Activated T-helper 1 cell treated with anti-CD3 and anti-CD28 coated beads, Interleukin-12 subunit alpha, Interleukin-12 subunit beta, Interleukin-2, Interleukin-4 antibody, amounts not matched to agents 30 ng/mL and 10 ng/mL and 1 ng/mL, durations not matched to agents 14 hours and 24 hours and 36 hours (primary cell): ENCODE measurements at regions of chr11 and their contacts with region 1.

Region 1: GRCh38 chr11:94493281-94494125 is at the starts of genes ANKRD49 and MRE11:
- DNase-seq: peak; percentile 96
- H3K4me3 Mint-ChIP-seq: peak within 1 kb of the TSS; percentile 94
- H3K27ac Mint-ChIP-seq: peak within 1 kb of the TSS; percentile 92
- H3K4me1 Mint-ChIP-seq: peaks cover 36% of the 10 kb centered on the region
- H3K27me3 Mint-ChIP-seq: no peaks in the 10 kb centered on the region
- total RNA-seq, gene ANKRD49: 20.0 and 21.2 TPM in 2 replicates
- total RNA-seq, gene MRE11: 43.8 and 45.9 TPM in 2 replicates

Region 2: DNA sequence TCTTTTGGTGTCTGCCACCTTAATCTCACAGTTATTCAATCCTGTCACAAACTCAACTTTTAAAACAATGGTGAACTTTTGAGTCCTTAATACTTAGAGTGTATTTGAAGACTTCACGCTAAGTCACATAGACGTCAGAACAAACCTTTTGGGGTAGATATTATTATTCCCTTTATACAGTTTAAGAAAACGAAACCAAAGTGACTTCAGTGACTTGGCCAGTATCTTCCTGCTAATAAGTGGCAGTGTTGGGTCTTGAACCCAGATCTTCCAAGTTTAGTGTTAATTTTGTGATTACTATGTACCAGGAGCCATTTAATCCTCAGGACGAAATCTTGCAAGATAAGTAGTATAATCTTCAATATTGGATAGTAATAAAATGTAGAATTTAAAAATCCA is 831.3 kb before region 1 on chr11:
- intact Hi-C with region 1: loop called (anchors 10 kb)
- DNase-seq: no peak
- H3K4me3 Mint-ChIP-seq: peak overlapping the region; percentile 89
- H3K27ac Mint-ChIP-seq: peak overlapping the region; percentile 86
- H3K4me1 Mint-ChIP-seq: peaks cover 47% of the 10 kb centered on the region
- H3K27me3 Mint-ChIP-seq: no peaks in the 10 kb centered on the region

Region 3: DNA sequence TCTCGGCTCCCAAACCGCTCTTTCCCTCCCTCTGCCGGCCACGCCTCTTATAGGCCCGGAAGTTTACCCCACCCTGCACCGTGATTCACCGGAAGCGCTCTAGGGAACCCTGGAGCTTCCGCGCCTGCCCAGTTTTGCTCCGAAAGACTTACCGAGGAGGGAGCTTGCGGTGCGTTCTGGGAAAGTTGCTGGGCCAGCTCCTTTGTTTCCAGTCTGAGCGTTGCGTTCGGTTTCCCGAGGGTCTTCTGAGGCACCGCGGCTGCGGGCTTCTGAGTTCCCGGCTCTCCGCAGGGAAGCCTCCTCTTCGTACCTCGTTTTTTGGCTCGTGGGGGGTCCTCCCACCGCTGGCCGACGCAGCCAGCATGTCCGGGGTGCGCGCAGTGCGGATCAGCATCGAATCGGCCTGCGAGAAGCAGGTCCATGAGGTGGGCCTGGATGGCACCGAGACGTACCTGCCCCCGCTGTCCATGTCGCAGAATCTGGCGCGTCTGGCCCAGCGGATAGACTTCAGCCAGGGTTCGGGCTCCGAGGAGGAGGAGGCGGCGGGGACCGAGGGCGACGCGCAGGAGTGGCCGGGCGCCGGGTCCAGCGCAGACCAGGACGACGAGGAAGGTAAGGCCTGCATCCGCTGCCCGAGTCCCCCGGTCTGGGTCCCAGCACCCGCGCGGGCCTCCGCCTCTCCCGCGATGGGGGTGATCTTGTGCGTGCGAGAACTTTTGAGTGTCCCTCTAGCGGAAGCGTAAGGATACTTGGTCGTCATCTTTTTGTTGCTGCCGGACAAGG is 709.2 kb before region 1 on chr11 and contains the start of gene MED17:
- intact Hi-C with region 1: loop called (anchors 1 kb)
- DNase-seq: peak; percentile 87
- H3K4me3 Mint-ChIP-seq: peak within 1 kb of the TSS; percentile 93
- H3K27ac Mint-ChIP-seq: peak within 1 kb of the TSS; percentile 88
- H3K4me1 Mint-ChIP-seq: peaks cover 45% of the 10 kb centered on the region
- H3K27me3 Mint-ChIP-seq: no peaks in the 10 kb centered on the region
- total RNA-seq, gene MED17: 55.8 and 59.4 TPM in 2 replicates

Region 4: DNA sequence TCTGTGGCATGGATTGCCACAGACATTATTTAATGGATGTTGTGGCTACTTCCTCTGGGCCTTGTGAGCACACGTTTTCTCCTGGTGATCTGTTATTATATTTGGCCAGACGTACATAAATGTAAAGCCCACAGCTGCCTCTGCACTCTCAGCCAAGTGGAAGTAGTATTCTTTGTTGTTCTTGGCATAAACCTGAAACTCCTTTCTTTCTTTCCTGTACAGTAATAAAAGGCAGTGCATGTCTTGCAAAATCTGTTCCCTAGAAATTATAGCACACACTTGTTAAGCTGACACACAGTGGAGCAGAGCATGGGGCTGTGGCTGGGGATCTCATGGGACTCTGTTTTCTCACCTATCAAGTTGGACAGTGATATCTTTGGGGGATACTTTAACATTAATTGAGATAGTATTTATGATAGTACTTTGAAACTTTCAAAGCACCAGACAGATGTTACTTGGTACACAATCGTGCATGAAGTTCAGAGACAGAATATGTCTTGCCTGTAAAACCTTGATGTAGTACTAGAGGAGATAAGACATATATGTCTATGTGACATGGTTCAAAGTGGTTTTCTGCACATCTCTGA is 344.0 kb before region 1 on chr11:
- intact Hi-C with region 1: loop called (anchors 5 kb)
- DNase-seq: no peak
- H3K4me3 Mint-ChIP-seq: no peak overlapping the region
- H3K27ac Mint-ChIP-seq: no peak overlapping the region
- H3K4me1 Mint-ChIP-seq: peaks cover 88% of the 10 kb centered on the region
- H3K27me3 Mint-ChIP-seq: no peaks in the 10 kb centered on the region

Region 5: DNA sequence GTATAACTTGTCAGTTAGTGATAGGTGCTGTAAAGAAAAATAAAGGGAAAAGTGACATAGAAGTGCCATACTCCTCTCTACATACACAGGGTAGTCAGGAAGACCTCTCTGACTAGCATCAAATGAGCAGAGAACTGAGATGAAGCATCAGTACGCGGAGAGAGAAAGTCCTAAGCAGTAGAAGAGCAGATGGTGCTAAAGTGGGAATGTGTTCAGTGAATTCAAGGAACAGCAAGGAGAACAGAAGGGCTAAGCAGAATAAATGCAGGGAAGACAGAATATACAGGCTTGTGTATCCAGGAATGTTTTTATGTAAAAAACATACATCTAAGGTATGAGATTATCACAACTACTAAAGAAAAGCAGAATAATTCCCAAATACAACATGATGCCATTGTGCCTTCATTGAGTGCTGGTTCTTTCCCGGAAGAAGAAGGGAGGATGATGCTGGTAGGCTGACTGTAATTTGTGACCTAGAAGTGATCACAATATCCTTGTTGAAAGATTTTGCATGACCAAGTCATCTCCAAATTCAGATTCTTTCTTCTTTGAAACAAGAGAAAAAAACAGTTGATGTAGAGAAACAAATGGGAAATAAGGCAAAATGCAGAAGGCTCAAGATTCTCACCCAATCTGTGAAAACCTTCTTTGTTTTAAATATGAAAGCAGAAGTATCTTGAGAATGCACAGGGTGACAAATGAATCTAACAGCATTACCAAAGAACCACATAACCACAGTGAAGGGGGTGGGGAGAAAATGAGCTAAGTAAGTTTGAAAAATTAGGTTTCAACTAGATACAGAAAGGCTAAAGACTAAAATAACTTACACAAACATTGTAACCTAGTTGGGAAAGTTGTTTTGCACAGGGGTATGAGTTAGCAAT is 20.3 kb before region 1 on chr11:
- intact Hi-C with region 1: loop called (anchors 1 kb)
- DNase-seq: peak; percentile 41
- H3K4me3 Mint-ChIP-seq: peak overlapping the region; percentile 53
- H3K27ac Mint-ChIP-seq: peak overlapping the region; percentile 67
- H3K4me1 Mint-ChIP-seq: peaks cover 36% of the 10 kb centered on the region
- H3K27me3 Mint-ChIP-seq: no peaks in the 10 kb centered on the region

Region 6: DNA sequence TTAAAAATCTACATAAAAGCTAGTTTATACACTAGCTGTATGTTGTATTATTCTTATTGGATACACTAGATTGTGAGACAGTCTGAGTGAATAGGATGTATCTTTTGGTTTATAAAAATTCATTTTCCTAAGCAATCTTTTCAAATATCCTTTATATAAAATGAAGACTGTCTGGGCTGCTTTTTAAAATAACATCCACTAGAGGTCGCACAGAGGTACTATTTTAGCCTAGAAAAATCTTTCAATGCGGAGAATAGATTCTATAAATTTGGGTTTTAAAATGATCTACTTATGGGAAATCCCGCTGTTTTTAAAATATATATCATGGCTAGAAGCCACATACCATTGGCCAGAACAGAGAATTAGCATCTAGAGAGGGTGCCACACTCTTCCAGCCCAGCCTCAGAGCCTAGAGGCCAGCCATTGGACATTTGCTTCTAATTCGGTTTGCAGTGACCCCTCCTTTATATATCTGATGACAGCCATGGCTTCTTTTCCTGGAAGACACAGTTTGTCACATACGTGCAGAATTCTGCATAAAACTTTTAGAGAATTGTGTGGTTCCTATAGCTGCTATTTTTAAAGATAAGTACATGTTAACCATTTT is 26.1 kb after region 1 on chr11:
- intact Hi-C with region 1: no loop called
- DNase-seq: no peak
- H3K4me3 Mint-ChIP-seq: no peak overlapping the region
- H3K27ac Mint-ChIP-seq: no peak overlapping the region
- H3K4me1 Mint-ChIP-seq: no peaks in the 10 kb centered on the region
- H3K27me3 Mint-ChIP-seq: peaks cover 27% of the 10 kb centered on the region